ENCODE measurements at regions of chr17 and their contacts with region 1.

Region 1: DNA sequence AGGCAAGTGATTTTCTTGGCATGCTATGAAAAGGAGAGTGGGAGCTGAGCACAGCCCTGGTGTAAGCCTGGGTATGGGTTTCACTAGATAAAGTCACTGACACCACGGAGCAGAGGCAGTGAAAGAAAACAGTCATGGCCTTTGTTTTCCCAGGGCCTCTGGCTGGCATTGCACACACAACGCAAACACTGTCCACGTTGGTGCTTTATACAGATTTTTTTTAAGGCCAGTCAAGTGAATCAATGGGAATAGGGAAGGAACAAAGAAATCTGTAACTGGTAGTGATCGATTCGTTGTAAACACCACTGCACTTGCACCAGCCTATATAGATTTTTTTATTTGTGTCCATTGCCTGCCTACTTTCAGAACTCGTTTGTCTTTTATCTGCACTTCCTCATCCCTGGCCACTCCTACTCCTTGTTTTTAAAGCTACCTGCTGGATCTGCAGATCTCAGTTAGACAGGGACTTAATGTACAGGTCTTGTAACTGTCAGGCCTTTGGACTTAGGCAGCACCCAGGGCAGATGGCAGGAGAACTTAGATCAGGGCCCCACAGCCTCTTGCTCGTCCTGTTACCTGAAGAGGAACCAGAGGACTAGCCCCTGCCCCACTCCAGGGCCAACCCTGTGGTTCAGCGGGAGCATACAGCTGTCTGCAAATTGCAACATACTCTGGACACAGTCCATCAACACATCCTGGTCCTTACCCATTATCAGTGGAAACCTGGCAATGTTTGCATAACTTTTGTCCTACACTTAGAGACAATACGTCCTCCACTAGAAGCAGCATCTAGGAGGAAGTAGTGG is 10.6 kb upstream of the TMIGD1 start:
- DNase-seq: peak; percentile 88 to 95
- H3K4me3 ChIP-seq: peak overlapping the region; percentile 6; the same call in 1 of the 2 replicates
- H3K4me3 Mint-ChIP-seq: peak overlapping the region; percentile 47
- H3K27ac Mint-ChIP-seq: peak overlapping the region; percentile 61
- H3K4me1 ChIP-seq: peaks cover 48% of the 10 kb centered on the region
- H3K4me1 Mint-ChIP-seq: peaks cover 21% of the 10 kb centered on the region
- H3K27me3 ChIP-seq: no peaks in the 10 kb centered on the region
- H3K27me3 Mint-ChIP-seq: no peaks in the 10 kb centered on the region
- CTCF ChIP-seq: no peak

Region 2: GRCh38 chr17:30378824-30379302 is 34.4 kb after region 1 on chr17 and contains the start of gene CPD:
- CTCF ChIA-PET with region 1: interaction called, 3 read pairs
- POLR2A ChIA-PET with region 1: interaction called, 8 read pairs
- intact Hi-C with region 1: loop called (anchors 1 kb)
- DNase-seq: peak; percentile 96 to 99
- H3K4me3 ChIP-seq: peak within 1 kb of the TSS; percentile 64
- H3K4me3 Mint-ChIP-seq: peak within 1 kb of the TSS; percentile 88
- H3K27ac Mint-ChIP-seq: peak within 1 kb of the TSS; percentile 86
- H3K4me1 ChIP-seq: peaks cover 40% of the 10 kb centered on the region
- H3K4me1 Mint-ChIP-seq: peaks cover 34% of the 10 kb centered on the region
- H3K27me3 ChIP-seq: no peaks in the 10 kb centered on the region
- H3K27me3 Mint-ChIP-seq: no peaks in the 10 kb centered on the region
- CTCF ChIP-seq: peak in 1 of 2 experiments; percentile 16
- total RNA-seq, gene CPD: 127 and 149 TPM in 2 replicates

Region 3: DNA sequence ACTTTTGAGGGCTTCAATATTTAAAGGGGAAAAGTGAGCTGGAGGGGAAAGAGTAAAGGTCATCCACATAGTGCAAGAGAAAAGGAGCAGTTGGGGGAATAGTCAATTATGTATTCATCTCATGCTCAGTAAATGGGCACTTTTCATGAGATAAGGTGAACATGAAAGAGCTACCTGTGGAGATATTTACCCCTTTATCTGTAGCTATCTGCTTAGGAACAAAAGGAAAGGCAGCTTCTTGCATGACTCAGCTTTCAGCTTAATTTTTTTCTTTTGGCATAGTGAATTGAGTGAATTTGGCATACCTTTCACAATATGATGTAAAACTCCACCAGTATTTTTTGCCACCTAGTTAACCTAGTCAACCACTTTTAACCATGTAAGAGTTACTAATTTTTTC is 60.7 kb after region 1 on chr17:
- CTCF ChIA-PET with region 1: no interaction called
- POLR2A ChIA-PET with region 1: no interaction called
- intact Hi-C with region 1: loop called (anchors 1 kb)
- DNase-seq: peak in 1 of 2 experiments; percentile 63
- H3K4me3 ChIP-seq: no peak overlapping the region
- H3K4me3 Mint-ChIP-seq: peak overlapping the region; percentile 62
- H3K27ac Mint-ChIP-seq: peak overlapping the region; percentile 84
- H3K4me1 ChIP-seq: peaks cover 36% of the 10 kb centered on the region
- H3K4me1 Mint-ChIP-seq: peaks cover 49% of the 10 kb centered on the region
- H3K27me3 ChIP-seq: no peaks in the 10 kb centered on the region
- H3K27me3 Mint-ChIP-seq: no peaks in the 10 kb centered on the region
- CTCF ChIP-seq: no peak

Region 4: GRCh38 chr17:30429155-30429554 is 84.7 kb after region 1 on chr17:
- CTCF ChIA-PET with region 1: no interaction called
- POLR2A ChIA-PET with region 1: no interaction called
- intact Hi-C with region 1: no loop called
- DNase-seq: no peak
- H3K4me3 ChIP-seq: no peak overlapping the region
- H3K4me3 Mint-ChIP-seq: no peak overlapping the region
- H3K27ac Mint-ChIP-seq: no peak overlapping the region
- H3K4me1 ChIP-seq: no peaks in the 10 kb centered on the region
- H3K4me1 Mint-ChIP-seq: no peaks in the 10 kb centered on the region
- H3K27me3 ChIP-seq: no peaks in the 10 kb centered on the region
- H3K27me3 Mint-ChIP-seq: no peaks in the 10 kb centered on the region
- CTCF ChIP-seq: no peak

Region 5: DNA sequence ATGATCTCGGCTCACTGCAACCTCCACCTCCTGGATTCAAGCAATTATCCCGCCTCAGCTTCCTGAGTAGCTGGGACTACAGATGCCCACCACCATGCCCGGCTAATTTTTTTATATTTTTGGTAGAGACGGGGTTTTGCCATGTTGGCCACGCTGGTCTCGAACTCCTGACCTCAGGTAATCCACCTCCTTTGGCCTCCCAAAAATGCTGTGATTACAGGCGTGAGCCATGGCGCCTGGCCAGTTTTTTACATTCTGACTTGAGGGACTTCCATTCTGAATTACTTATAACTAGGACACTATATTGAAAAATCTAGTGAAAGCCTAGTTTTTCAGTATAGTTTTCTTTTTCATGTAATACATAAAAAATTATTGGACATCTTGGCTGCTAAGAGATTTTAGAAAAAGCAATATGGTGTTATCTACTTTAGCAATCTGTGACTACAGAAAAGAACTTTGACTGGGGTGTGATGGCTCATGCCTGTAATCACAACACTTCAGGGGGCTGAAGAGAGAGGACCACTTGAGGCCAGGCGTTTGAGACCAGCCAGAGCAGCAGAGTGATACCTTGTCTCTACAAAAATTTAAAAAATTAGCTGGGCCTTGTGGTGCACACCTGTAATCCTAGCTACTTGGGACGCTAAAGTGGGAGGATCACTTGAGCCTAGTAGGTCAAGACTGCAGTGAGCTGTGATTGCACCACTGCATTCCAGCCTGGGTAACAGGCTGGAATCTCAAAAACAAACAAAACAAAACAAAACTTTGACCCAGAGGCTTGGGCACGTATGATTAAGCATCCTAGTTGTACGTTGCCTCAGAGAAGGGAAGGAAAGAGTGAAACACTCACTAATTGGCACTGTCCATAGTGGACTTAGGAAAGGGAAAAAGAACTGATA is 105.9 kb after region 1 on chr17:
- CTCF ChIA-PET with region 1: no interaction called
- POLR2A ChIA-PET with region 1: no interaction called
- intact Hi-C with region 1: loop called (anchors 1 kb)
- DNase-seq: peak; percentile 84 to 87
- H3K4me3 ChIP-seq: no peak overlapping the region
- H3K4me3 Mint-ChIP-seq: peak overlapping the region; percentile 59
- H3K27ac Mint-ChIP-seq: peak overlapping the region; percentile 95
- H3K4me1 ChIP-seq: peaks cover 21% of the 10 kb centered on the region
- H3K4me1 Mint-ChIP-seq: peaks cover 25% of the 10 kb centered on the region
- H3K27me3 ChIP-seq: no peaks in the 10 kb centered on the region
- H3K27me3 Mint-ChIP-seq: no peaks in the 10 kb centered on the region
- CTCF ChIP-seq: no peak

Region 6: GRCh38 chr17:30477083-30477773 is 132.7 kb after region 1 on chr17 and contains the start of gene GOSR1:
- CTCF ChIA-PET with region 1: interaction called, 6 read pairs
- POLR2A ChIA-PET with region 1: no interaction called
- intact Hi-C with region 1: loop called (anchors 1 kb)
- DNase-seq: peak; percentile 94 to 95
- H3K4me3 ChIP-seq: peak within 1 kb of the TSS; percentile 96
- H3K4me3 Mint-ChIP-seq: peak within 1 kb of the TSS; percentile 91
- H3K27ac Mint-ChIP-seq: peak within 1 kb of the TSS; percentile 97
- H3K4me1 ChIP-seq: no peaks in the 10 kb centered on the region; the same call in 1 of the 2 replicates
- H3K4me1 Mint-ChIP-seq: peaks cover 13% of the 10 kb centered on the region
- H3K27me3 ChIP-seq: no peaks in the 10 kb centered on the region
- H3K27me3 Mint-ChIP-seq: no peaks in the 10 kb centered on the region
- CTCF ChIP-seq: peak; percentile 71 to 85
- total RNA-seq, gene GOSR1: 78.3 and 86.5 TPM in 2 replicates

Region 7: DNA sequence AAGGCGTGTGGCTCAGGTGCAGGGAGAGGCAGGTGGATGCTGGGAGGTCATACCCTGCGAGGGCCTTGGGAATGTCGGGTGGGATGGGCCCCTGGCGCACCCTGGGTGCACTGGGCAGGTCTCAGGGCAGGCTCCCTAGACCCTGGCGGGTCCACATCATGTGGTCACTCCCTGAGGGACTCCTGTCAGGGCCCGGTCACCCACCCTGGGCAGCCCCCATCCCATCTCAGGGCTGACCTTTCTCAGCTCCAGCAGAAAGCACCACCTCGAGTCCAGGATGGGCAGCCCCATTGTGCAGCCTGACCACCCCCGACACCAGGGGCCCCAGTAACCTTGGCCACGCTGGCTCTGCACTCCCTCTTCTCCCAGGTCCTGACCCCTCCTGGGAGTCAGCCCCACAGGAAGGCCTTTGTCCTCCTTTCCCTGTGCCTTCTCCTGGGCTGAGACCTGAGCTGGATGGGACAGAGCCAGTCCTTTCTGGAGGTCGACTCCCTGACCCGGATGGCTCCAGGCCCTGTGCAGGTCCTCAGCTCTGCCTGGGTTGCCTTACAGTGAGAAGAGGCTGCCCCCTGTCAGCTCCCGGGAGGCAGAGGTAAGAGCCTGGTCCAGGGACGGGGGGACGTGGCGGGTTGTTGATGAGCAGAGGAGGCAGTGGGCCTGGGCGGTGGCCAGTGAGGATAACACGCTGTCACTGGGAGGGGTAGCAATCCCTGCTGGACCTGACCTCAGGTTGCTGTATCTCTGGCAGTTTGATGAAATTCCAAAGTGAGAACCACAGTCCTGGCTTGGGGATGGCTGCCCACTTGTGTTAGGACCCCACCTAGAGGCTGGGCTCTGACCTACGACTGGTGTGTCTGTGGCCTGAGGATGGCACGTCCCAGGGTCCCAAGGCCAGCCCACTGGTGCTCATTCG is 210.6 kb after region 1 on chr17:
- CTCF ChIA-PET with region 1: no interaction called
- POLR2A ChIA-PET with region 1: no interaction called
- intact Hi-C with region 1: loop called (anchors 1 kb)
- DNase-seq: peak; percentile 67 to 69
- H3K4me3 ChIP-seq: no peak overlapping the region
- H3K4me3 Mint-ChIP-seq: no peak overlapping the region
- H3K27ac Mint-ChIP-seq: no peak overlapping the region
- H3K4me1 ChIP-seq: no peaks in the 10 kb centered on the region
- H3K4me1 Mint-ChIP-seq: peaks cover 19% of the 10 kb centered on the region
- H3K27me3 ChIP-seq: no peaks in the 10 kb centered on the region
- H3K27me3 Mint-ChIP-seq: no peaks in the 10 kb centered on the region
- CTCF ChIP-seq: peak; percentile 17 to 24

Region 8: DNA sequence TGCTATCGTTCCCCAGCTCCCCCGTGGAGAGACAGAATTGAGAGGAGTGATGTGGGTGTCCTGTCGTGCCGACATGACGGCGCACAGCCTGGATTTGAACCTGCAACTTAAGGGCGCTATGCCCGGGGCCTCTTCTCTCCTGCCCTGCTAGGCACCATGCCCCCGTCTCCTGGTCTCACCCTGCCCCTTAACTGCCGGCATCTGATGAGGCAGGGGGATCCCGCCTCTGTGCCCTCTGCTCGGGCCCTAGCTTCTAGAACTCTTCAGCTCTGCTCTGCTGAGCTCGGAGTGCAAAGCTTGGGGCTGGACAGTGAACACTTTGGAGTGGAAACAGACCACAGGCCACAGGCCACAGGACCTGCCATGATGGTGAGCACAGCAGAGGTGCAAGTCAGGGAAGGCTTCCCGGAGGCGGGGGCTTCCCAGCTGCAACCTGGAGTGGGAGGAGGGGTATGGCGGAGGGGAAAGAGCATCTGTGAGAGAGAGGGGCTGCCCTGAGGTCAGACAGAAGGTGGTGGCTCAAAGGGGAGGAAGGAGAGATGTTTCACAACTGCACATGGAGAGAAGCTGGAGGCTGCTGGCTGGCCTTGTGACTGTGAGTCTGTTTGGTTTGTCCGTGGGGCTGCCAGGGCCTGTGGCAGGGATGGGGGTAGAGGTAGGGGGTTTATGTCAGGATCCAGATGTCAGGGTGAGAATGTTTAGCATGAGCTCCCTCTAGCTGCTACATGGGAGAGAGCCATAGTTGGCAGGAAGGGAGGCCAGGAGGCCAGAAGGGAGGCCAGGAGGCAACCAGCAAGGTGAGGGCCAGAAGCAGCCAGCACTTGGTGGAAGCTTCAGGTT is 372.2 kb after region 1 on chr17:
- CTCF ChIA-PET with region 1: no interaction called
- POLR2A ChIA-PET with region 1: no interaction called
- intact Hi-C with region 1: loop called (anchors 5 kb)
- DNase-seq: peak in 1 of 2 experiments; percentile 43
- H3K4me3 ChIP-seq: no peak overlapping the region
- H3K4me3 Mint-ChIP-seq: no peak overlapping the region
- H3K27ac Mint-ChIP-seq: no peak overlapping the region
- H3K4me1 ChIP-seq: no peaks in the 10 kb centered on the region
- H3K4me1 Mint-ChIP-seq: peaks cover 7% of the 10 kb centered on the region
- H3K27me3 ChIP-seq: no peaks in the 10 kb centered on the region
- H3K27me3 Mint-ChIP-seq: no peaks in the 10 kb centered on the region
- CTCF ChIP-seq: peak in 1 of 2 experiments; percentile 43

Measured in Caco-2 (cell line).